ENCODE measurements at regions of chr15 and their contacts with region 1.

Region 1: GRCh38 chr15:48925714-48926223 is 38.0 kb downstream of the SHC4 start:
- DNase-seq: peak; percentile 97
- H3K4me3 ChIP-seq: no peak overlapping the region
- H3K27ac ChIP-seq: peak overlapping the region; percentile 78
- H3K4me1 ChIP-seq: peaks cover 29% of the 10 kb centered on the region
- H3K27me3 ChIP-seq: no peaks in the 10 kb centered on the region
- CTCF ChIP-seq: no peak

Region 2: DNA sequence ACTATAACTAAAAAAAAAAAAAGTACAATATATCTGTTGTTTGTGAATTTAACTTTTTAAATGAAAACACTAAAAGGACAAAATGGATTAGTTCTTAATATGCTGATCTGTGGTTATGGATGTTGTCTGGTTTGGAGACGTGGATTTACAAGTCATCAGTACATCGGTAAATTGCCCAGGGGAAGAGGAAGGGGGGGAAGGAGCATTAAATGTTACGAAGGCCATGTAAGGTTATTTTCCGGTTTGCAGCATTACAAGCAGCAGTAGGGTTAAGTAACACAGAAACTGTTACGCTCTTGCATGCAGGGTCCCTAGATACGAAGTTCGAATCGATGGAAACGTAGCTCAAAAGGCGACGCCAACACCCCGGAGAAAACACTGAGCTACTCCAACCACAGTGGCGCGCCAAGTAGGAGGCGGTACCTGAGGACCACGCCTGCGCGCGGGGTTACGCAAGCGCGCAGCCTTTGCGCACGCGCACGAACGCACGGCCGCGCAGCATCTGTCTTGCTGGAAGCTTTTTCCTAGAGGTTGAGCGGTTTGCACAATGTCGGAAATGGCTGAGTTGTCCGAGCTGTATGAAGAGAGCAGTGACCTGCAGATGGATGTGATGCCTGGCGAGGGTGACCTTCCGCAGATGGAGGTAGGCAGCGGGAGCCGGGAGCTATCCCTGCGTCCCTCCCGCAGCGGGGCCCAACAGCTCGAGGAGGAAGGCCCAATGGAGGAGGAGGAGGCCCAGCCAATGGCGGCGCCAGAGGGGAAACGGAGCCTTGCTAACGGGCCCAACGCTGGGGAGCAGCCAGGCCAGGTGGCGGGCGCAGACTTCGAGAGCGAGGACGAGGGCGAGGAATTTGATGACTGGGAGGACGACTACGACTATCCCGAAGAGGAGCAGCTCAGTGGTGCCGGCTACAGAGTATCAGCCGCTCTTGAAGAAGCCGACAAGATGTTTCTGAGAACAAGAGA is 47.9 kb before region 1 on chr15 and contains the start of gene EID1:
- CTCF ChIA-PET with region 1: no interaction called
- dilution Hi-C with region 1: no loop called
- in situ Hi-C with region 1: no loop called
- intact Hi-C with region 1: loop called (anchors 5 kb)
- DNase-seq: peak; percentile 95
- H3K4me3 ChIP-seq: peak within 1 kb of the TSS; percentile 47 to 96 (median 75)
- H3K27ac ChIP-seq: peak within 1 kb of the TSS; percentile 68
- H3K4me1 ChIP-seq: peaks cover 8% of the 10 kb centered on the region
- H3K27me3 ChIP-seq: no peaks in the 10 kb centered on the region
- CTCF ChIP-seq: no peak
- total RNA-seq, gene EID1: 84.6 to 147 TPM

Region 3: DNA sequence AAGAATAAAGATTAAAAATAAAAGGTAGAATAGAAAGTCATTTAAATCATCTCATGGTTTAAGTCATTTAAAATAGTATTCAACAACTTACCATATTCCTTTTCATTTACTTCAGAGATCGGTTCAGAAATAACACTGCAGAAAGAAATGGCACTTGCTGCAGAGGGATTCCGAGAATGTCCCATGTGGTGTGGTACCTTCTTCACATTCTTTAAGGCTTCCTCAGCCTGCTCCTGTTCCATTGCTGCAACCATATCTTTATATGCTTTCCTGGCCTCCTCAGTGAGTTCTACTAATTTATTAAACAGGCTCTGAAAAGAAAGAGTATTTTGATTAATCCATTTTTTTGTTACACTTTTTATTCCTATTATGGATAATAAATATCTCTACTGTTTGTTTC is 70.5 kb after region 1 on chr15:
- CTCF ChIA-PET with region 1: no interaction called
- dilution Hi-C with region 1: no loop called
- in situ Hi-C with region 1: no loop called
- intact Hi-C with region 1: no loop called
- DNase-seq: no peak
- H3K4me3 ChIP-seq: no peak overlapping the region
- H3K27ac ChIP-seq: no peak overlapping the region
- H3K4me1 ChIP-seq: no peaks in the 10 kb centered on the region
- H3K27me3 ChIP-seq: no peaks in the 10 kb centered on the region
- CTCF ChIP-seq: no peak

Measured in mammary epithelial cell (primary cell).